Left cardiac atrium (tissue), 4 donors: ENCODE measurements at regions of chr20 and their contacts with region 1.

Region 1: GRCh38 chr20:56817780-56818675 is 188.9 kb downstream of the TFAP2C start:
- DNase-seq: no peak
- ATAC-seq: no peak

Region 2: DNA sequence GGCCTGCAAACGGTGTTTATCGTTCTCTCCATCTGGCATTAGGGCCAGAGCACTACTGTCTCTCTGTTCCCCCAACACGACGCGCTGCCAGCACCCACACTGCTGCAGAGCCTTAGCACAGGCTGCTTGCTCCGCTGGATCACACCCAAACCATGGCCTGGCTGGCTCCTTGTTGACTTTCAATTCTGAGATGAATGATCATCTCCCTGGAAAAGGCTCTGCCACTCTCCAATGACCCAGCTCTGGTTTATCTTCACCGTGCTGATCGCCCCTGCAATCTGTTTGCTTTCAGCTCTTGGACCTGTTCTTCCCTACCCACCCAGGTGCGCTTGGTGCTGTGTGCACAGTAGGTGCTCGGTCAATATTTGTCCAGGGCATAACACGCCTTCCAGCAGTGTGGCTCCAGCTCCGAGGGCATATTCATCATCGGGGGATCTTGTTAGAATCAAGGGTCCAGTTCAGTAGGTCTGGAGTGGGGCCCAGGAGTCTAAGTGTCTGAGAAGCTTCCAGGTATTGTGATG is 82.8 kb before region 1 on chr20:
- intact Hi-C with region 1: loop called in 1 of 2 experiments (anchors 2 kb)
- DNase-seq: no peak
- ATAC-seq: no peak